ENCODE measurements at regions of chr3 and their contacts with region 1.

Region 1: DNA sequence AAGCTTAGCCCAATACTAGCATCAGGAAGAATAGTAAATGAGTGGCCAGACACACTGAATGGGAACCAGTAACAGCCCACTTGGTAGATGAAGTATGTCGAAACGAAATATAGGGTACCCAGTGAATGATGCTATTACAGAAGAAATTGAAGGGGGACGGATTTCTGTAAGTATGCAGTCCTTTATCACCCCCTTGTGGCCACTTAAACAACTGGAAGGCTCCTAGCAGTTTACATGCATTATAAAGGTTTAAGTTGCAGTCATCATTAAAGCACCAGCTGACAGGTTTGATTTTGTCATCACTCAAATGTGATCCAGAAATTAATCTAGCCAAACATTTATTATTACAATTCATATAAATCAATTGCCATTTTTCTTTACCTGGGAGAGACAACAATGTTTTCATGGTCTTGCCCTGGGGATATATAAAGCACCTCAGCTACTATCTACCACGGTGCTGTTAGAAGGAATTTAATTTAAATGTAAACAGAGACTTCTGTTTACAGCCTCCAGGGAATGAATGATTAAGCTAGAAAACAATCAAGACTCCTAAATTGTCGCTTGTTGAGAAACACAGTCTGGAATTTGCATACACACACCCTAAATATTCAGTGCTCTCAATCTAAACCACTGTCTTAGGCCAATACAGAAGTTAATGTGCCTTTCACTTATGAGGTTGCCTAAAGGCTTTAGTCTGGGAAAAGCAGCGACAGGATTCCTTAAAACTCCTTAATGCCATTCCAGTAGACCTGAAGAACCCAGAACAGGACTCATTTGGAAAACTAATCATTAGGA is 7.8 kb downstream of the EIF1B start:
- DNase-seq: peak; percentile 49
- ATAC-seq: peak; percentile 86
- H3K4me3 Mint-ChIP-seq: no peak overlapping the region
- H3K27ac Mint-ChIP-seq: no peak overlapping the region
- H3K4me1 Mint-ChIP-seq: peaks cover 5% of the 10 kb centered on the region
- H3K27me3 Mint-ChIP-seq: no peaks in the 10 kb centered on the region

Region 2: DNA sequence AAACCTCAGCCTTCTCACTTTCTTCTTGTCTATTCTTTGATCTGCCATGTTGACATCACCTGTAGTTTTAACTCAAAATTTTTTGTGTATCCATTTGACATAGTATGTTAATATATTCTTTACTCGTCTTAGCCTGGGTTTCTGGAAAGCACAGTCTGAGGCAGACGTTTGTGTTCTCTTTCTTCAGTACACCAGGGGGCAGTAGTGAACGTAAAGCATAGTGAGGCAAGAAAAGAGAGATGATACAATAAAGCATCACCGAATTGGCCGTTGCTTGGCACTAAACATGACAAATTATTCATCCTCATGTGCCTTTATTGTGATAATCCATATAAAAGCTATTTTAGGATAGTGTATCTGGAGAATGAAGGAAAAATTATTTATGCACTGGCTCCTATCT is 648.8 kb before region 1 on chr3:
- CTCF ChIA-PET with region 1: no interaction called
- POLR2A ChIA-PET with region 1: no interaction called
- intact Hi-C with region 1: loop called in 1 of 2 experiments (anchors 2 kb)
- DNase-seq: peak; percentile 13
- ATAC-seq: no peak
- H3K4me3 Mint-ChIP-seq: no peak overlapping the region
- H3K27ac Mint-ChIP-seq: no peak overlapping the region
- H3K4me1 Mint-ChIP-seq: no peaks in the 10 kb centered on the region
- H3K27me3 Mint-ChIP-seq: peaks cover 7% of the 10 kb centered on the region

Region 3: GRCh38 chr3:39707314-39707909 is 609.8 kb before region 1 on chr3:
- CTCF ChIA-PET with region 1: interaction called, 4 read pairs
- POLR2A ChIA-PET with region 1: no interaction called
- intact Hi-C with region 1: loop called in 1 of 2 experiments (anchors 2 kb)
- DNase-seq: no peak
- ATAC-seq: no peak
- H3K4me3 Mint-ChIP-seq: no peak overlapping the region
- H3K27ac Mint-ChIP-seq: no peak overlapping the region
- H3K4me1 Mint-ChIP-seq: no peaks in the 10 kb centered on the region
- H3K27me3 Mint-ChIP-seq: peaks cover 3% of the 10 kb centered on the region

Region 4: GRCh38 chr3:39879581-39879980 is 437.7 kb before region 1 on chr3:
- CTCF ChIA-PET with region 1: no interaction called
- POLR2A ChIA-PET with region 1: no interaction called
- intact Hi-C with region 1: no loop called
- DNase-seq: no peak
- ATAC-seq: no peak
- H3K4me3 Mint-ChIP-seq: no peak overlapping the region
- H3K27ac Mint-ChIP-seq: no peak overlapping the region
- H3K4me1 Mint-ChIP-seq: no peaks in the 10 kb centered on the region
- H3K27me3 Mint-ChIP-seq: peaks cover 2% of the 10 kb centered on the region

Region 5: DNA sequence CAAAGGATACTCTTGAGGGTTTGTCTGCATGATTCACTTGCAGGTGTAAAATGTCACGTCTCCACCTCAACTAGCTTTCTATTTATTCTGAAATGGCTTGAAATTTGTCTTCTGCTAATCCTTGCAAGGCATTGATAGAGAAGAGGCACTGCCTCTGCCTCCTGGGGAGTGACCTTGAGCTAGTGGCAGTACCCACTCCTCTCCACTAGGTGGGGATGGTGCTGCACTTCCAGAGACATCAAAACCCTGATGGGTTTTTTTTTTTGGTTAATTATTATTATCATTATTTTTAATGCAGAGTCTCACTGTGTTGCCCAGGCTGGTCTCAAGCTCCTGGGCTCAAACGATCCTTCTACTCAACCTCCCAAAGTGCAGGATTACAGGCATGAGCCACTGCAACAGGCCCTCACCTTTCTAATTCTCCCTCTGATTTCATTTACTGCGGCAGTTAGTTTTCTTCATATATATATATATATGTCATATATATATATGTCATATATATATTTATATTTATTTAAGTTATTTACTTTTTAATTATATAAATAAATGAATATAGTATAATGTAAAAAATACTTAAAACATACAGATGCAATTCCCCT is 125.3 kb before region 1 on chr3:
- CTCF ChIA-PET with region 1: interaction called, 113 read pairs
- POLR2A ChIA-PET with region 1: interaction called, 3 read pairs
- intact Hi-C with region 1: loop called (anchors 1 kb)
- DNase-seq: peak; percentile 72
- ATAC-seq: peak; percentile 57
- H3K4me3 Mint-ChIP-seq: no peak overlapping the region
- H3K27ac Mint-ChIP-seq: no peak overlapping the region
- H3K4me1 Mint-ChIP-seq: no peaks in the 10 kb centered on the region
- H3K27me3 Mint-ChIP-seq: no peaks in the 10 kb centered on the region

Region 6: DNA sequence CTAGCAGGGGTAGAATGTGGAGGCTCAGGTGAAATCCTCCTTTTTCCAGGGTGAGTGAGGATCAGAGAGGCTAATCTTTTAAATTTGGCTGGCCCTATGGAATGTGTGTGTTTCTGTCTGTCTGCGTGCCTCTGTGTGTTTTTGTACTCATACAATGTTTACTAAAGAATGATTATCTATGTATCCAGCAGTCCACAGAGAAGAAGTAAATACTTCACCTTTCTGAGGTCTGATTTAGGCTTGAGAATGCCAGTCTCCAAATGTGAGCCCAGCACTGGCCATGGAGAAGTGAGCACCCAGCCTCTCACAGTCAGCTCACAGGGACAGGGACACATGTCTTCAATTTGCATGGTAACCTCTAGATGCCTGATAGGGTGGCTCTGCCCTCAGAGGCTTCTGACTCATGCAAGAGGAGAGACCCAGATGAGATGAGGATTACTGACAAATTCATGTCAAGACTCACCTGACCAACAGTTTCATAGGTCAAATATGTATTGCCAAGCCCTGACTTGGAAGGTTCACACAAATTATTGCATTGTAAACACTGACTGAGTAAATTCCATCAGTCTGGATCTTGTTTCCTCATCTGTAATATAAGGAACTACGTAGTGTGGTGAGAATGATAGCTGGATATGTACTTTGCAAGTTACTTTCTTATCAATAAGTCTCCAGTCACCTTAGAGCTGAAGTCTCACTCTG is 100.7 kb after region 1 on chr3:
- CTCF ChIA-PET with region 1: no interaction called
- POLR2A ChIA-PET with region 1: no interaction called
- intact Hi-C with region 1: no loop called
- DNase-seq: no peak
- ATAC-seq: no peak
- H3K4me3 Mint-ChIP-seq: no peak overlapping the region
- H3K27ac Mint-ChIP-seq: no peak overlapping the region
- H3K4me1 Mint-ChIP-seq: peaks cover 1% of the 10 kb centered on the region
- H3K27me3 Mint-ChIP-seq: no peaks in the 10 kb centered on the region

Region 7: DNA sequence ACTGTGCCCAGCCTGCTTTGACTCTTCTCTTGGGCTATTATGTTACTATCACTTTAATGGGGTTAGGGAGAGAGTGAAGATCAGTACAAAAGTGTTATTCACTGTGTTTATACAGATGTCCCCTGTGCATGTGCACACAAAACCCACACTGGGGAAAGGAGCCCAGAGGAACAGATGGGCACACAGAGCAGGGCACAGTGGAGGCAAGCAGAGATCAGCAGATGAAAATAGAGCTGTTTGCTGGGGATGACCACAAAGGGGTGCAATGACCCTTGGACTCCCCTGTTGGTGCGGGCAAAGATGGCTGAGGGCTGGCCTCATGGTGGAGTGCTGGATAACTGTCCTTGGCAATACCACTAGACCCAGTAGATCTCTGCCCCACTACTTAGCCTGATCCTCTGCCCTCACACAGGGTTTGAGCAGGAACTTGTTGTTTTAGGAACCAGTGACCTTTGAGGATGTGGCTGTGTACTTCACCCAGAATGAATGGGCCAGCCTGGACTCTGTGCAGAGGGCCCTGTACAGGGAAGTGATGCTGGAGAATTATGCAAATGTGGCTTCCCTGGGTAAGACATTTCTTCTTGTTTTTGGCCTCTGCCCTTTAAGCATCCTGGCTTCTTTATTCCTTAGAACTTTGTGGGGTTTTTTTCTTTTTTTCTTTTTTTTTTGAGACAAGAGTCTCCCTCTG is 193.9 kb after region 1 on chr3:
- CTCF ChIA-PET with region 1: no interaction called
- POLR2A ChIA-PET with region 1: no interaction called
- intact Hi-C with region 1: no loop called
- DNase-seq: no peak
- ATAC-seq: no peak
- H3K4me3 Mint-ChIP-seq: no peak overlapping the region
- H3K27ac Mint-ChIP-seq: no peak overlapping the region
- H3K4me1 Mint-ChIP-seq: peaks cover 6% of the 10 kb centered on the region
- H3K27me3 Mint-ChIP-seq: no peaks in the 10 kb centered on the region

Region 8: GRCh38 chr3:40660554-40660953 is 343.3 kb after region 1 on chr3:
- CTCF ChIA-PET with region 1: no interaction called
- POLR2A ChIA-PET with region 1: no interaction called
- intact Hi-C with region 1: loop called in 1 of 2 experiments (anchors 10 kb)
- DNase-seq: no peak
- ATAC-seq: no peak
- H3K4me3 Mint-ChIP-seq: no peak overlapping the region
- H3K27ac Mint-ChIP-seq: no peak overlapping the region
- H3K4me1 Mint-ChIP-seq: no peaks in the 10 kb centered on the region
- H3K27me3 Mint-ChIP-seq: peaks cover 10% of the 10 kb centered on the region

Region 9: GRCh38 chr3:40719660-40720287 is 402.5 kb after region 1 on chr3:
- CTCF ChIA-PET with region 1: no interaction called
- POLR2A ChIA-PET with region 1: no interaction called
- intact Hi-C with region 1: loop called in 1 of 2 experiments (anchors 10 kb)
- DNase-seq: no peak
- ATAC-seq: no peak
- H3K4me3 Mint-ChIP-seq: no peak overlapping the region
- H3K27ac Mint-ChIP-seq: no peak overlapping the region
- H3K4me1 Mint-ChIP-seq: no peaks in the 10 kb centered on the region
- H3K27me3 Mint-ChIP-seq: peaks cover 7% of the 10 kb centered on the region